Naive thymus-derived CD8-positive, alpha-beta T cell (primary cell): ENCODE measurements at regions of chr16 and their contacts with region 1.

Region 1: DNA sequence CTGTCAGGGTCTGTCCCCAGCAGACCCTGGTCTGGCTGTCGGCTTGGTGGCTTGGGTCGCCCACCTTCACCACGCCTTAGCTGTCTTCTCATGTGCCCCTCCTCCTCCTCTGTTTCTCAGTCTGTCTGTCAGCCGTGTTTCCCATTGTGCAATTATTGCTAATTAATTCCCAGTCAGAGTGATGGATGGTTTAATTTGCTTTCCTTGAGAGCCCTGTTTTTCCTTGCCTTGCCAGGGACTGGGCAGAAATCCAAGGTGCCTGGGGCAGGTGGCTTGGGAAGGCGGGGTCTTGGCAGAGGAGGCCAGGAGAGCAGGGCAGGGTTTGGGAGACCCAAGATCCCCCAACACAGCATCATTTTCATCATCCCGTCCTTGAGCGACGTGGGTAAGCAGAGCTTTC is 21.2 kb downstream of the NECAB2 start:
- DNase-seq: peak in 1 of 10 donors; percentile 15
- ATAC-seq: no peak
- H3K4me3 Mint-ChIP-seq: no peak overlapping the region
- H3K27ac Mint-ChIP-seq: no peak overlapping the region
- H3K4me1 Mint-ChIP-seq: no peaks in the 10 kb centered on the region
- H3K27me3 Mint-ChIP-seq: peaks cover 4 to 57% (median 40%) of the 10 kb centered on the region in 5 donors

Region 2: DNA sequence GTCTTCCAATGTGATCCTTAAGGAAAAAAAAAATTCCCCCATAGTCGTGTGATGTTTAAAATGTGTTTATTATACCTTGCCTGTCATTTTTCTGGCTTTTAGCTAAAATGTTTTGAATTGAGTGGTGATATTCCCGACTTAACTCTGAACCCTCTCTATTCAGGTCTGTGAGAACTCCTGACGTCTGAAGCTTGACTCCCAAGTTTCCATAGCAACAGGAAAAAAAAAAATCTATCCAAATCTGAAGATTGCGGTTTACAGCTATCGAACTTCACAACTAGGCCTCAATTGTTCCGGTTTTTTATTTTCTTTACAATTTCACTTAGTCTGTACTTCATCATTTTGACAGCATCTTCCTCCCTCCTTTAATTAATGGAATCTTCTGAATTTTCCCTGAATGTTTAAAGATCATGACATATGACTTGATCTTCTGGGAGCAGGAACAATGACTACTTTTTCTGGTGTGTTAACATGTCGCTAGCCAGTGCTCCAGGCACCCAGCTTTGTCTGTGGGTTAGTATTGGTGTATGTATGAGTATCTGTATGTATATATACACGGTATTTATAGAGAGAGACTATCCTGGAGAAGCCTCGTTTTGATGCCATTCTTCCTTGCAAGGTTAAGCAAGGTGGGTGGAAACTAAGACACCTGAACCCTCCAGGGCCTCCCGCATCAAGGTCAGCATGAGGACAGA is 194.3 kb before region 1 on chr16:
- POLR2A ChIA-PET with region 1: interaction called, 11 read pairs
- DNase-seq: no peak
- ATAC-seq: no peak
- H3K4me3 Mint-ChIP-seq: no peak overlapping the region
- H3K27ac Mint-ChIP-seq: no peak overlapping the region
- H3K4me1 Mint-ChIP-seq: peaks cover 0 to 6% (median 0%) of the 10 kb centered on the region in 4 donors
- H3K27me3 Mint-ChIP-seq: peaks cover 9 to 38% (median 19%) of the 10 kb centered on the region in 5 donors

Region 3: DNA sequence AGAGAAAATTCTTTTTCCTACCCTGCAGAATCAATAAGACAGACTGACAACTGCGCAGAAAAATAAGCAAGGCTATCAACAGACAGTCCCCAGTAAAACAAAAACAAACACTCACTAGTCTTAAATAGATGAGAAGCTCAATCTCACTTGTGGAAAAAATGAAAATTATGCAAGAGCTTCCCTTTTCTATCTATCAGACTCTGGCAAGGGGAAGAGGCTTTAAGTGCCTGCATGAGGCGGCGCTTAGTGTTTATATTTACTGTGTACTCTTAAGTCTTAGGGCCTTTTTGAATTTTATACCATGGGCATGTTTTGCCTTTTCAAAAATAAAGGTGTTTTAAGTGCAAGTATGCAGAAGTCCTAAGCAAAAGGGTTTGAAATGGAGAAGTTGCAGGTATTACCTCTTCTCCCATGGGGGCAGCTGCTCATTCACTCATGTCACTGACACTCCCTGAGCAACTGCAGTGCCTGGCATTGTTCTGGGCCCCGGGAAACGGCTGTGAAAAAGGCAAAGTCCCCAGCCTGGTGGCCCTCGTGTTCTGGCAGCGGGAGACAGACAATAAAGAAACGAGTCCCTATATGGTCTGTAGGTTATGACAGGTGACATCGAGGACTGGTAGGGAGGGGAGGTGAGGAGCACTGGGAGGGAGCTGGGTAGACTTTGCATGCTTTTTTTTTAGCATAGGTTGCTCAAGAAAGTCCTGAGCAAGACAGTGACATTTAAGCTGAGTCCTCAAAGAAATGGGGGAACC is 146.4 kb before region 1 on chr16:
- POLR2A ChIA-PET with region 1: no interaction called
- DNase-seq: peak in 1 of 10 donors; percentile 4
- ATAC-seq: peak in 1 of 2 donors; percentile 23
- H3K4me3 Mint-ChIP-seq: peak overlapping the region in 1 of 10 donors; percentile 40
- H3K27ac Mint-ChIP-seq: peak overlapping the region in 1 of 10 donors; percentile 43
- H3K4me1 Mint-ChIP-seq: peaks cover 0 to 22% (median 0%) of the 10 kb centered on the region in 4 donors
- H3K27me3 Mint-ChIP-seq: peaks cover 2 to 10% (median 6%) of the 10 kb centered on the region in 5 donors

Region 4: GRCh38 chr16:83952940-83953795 is 36.1 kb before region 1 on chr16 and contains the start of gene OSGIN1:
- POLR2A ChIA-PET with region 1: no interaction called
- DNase-seq: peak in 6 of 10 donors; percentile 6 to 65 (median 24)
- ATAC-seq: peak; percentile 59 to 68
- H3K4me3 Mint-ChIP-seq: peak within 1 kb of the TSS in 7 of 10 donors; percentile 31 to 65 (median 58)
- H3K27ac Mint-ChIP-seq: no peak within 1 kb of the TSS
- H3K4me1 Mint-ChIP-seq: peaks cover 5 to 12% (median 9%) of the 10 kb centered on the region in 4 donors
- H3K27me3 Mint-ChIP-seq: peaks cover 4 to 29% (median 12%) of the 10 kb centered on the region in 5 donors
- polyA plus RNA-seq, gene OSGIN1: 0.26 TPM in 1 of 3 donors, not detected in the others

Region 5: GRCh38 chr16:83971165-83972130 is 17.8 kb before region 1 on chr16:
- POLR2A ChIA-PET with region 1: no interaction called
- DNase-seq: no peak
- ATAC-seq: no peak
- H3K4me3 Mint-ChIP-seq: no peak overlapping the region
- H3K27ac Mint-ChIP-seq: no peak overlapping the region
- H3K4me1 Mint-ChIP-seq: peaks cover 3 to 11% (median 5%) of the 10 kb centered on the region in 4 donors
- H3K27me3 Mint-ChIP-seq: peaks cover 5 to 57% (median 18%) of the 10 kb centered on the region in 5 donors